ENCODE measurements at regions of chr3 and their contacts with region 1.

Region 1: GRCh38 chr3:36729204-36730056 is 34.9 kb downstream of the DCLK3 start:
- DNase-seq: peak; percentile 69
- H3K4me3 ChIP-seq: no peak overlapping the region
- H3K27ac ChIP-seq: no peak overlapping the region
- H3K4me1 ChIP-seq: no peaks in the 10 kb centered on the region
- H3K27me3 ChIP-seq: no peaks in the 10 kb centered on the region
- CTCF ChIP-seq: peak; percentile 84

Region 2: DNA sequence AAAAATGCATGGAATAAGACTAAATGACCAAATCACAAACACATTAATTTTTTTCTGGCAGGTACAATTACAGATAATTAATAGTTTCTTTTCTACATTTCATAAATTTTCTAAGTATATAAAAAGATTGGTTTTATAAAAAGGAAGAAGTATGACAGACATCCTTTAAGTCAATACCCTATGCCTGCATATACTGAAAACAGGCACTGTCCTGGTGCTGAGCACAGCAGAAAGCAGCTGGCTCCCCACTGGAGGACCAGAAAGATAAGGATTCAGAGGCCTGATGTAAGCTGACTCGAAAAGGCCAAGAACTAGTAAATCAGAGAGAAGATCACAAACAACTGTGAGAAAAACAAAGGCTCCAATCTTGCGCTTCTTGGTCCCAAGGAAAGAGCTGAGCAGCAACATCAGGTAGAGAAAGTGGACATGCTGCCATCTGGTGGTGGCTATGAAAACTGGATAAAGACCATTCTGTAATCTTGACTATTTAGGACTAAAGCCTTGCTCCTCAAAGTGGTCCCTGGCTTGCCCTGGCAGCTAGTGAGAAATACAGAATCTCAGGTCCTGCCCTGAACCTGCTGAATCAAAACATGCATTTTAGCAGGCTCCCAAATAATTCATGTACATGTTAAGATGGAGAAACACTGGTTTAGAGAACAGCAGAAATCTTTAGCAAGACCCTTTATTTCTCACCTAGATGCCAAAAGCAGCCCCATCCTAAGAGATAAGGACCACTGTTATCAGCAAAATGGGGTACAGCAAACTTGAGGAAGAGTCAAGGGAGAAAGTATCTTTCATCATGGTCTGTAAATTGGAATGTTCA is 139.4 kb after region 1 on chr3:
- CTCF ChIA-PET with region 1: no interaction called
- POLR2A ChIA-PET with region 1: no interaction called
- intact Hi-C with region 1: loop called (anchors 2 kb)
- DNase-seq: peak; percentile 78
- H3K4me3 ChIP-seq: no peak overlapping the region
- H3K27ac ChIP-seq: no peak overlapping the region
- H3K4me1 ChIP-seq: no peaks in the 10 kb centered on the region
- H3K27me3 ChIP-seq: no peaks in the 10 kb centered on the region
- CTCF ChIP-seq: peak; percentile 84

Region 3: DNA sequence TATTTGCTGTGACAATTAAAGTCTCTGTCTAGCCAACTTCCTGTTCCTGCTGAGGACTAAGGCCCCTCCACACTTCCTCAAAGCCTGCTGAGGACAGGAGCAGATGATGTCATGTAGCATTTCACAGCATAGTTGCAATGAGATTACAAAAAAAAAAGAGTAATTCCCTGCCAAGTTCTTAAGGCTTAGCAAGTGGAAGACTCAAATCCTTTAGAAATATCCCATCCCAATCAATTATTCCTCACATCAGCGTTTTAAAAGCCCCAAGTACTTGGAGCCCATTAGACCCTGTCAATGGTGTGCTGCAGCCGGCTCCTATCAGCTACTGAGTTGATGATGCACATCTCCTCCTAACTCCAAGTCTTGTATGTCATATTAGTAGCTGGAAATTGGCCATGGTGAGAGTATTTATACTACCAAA is 163.7 kb after region 1 on chr3:
- CTCF ChIA-PET with region 1: no interaction called
- POLR2A ChIA-PET with region 1: interaction called, 10 read pairs
- intact Hi-C with region 1: no loop called
- DNase-seq: peak; percentile 99
- H3K4me3 ChIP-seq: no peak overlapping the region
- H3K27ac ChIP-seq: no peak overlapping the region
- H3K4me1 ChIP-seq: peaks cover 54% of the 10 kb centered on the region
- H3K27me3 ChIP-seq: peaks cover 4% of the 10 kb centered on the region
- CTCF ChIP-seq: no peak

Region 4: DNA sequence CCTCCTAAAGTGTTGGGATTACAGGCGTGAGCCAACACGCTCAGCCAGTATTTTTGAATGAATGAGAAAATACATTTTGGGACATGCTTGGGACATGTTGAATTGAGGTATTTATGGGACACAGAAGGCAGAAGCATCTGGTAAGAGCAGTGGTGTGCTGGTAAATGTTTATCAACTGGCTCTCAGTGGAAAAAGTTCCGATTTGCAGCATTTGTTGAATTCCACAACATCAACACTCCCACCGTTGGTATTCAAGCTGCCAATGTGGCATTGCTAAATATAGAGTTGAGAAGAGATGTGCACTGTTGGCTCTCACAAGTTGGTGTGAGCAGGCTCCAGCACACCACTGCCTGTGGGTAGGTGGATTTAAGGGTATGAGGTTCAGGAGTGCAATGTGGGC is 480.8 kb after region 1 on chr3:
- CTCF ChIA-PET with region 1: no interaction called
- POLR2A ChIA-PET with region 1: no interaction called
- intact Hi-C with region 1: loop called (anchors 5 kb)
- DNase-seq: no peak
- H3K4me3 ChIP-seq: no peak overlapping the region
- H3K27ac ChIP-seq: no peak overlapping the region
- H3K4me1 ChIP-seq: no peaks in the 10 kb centered on the region
- H3K27me3 ChIP-seq: no peaks in the 10 kb centered on the region
- CTCF ChIP-seq: no peak

Region 5: DNA sequence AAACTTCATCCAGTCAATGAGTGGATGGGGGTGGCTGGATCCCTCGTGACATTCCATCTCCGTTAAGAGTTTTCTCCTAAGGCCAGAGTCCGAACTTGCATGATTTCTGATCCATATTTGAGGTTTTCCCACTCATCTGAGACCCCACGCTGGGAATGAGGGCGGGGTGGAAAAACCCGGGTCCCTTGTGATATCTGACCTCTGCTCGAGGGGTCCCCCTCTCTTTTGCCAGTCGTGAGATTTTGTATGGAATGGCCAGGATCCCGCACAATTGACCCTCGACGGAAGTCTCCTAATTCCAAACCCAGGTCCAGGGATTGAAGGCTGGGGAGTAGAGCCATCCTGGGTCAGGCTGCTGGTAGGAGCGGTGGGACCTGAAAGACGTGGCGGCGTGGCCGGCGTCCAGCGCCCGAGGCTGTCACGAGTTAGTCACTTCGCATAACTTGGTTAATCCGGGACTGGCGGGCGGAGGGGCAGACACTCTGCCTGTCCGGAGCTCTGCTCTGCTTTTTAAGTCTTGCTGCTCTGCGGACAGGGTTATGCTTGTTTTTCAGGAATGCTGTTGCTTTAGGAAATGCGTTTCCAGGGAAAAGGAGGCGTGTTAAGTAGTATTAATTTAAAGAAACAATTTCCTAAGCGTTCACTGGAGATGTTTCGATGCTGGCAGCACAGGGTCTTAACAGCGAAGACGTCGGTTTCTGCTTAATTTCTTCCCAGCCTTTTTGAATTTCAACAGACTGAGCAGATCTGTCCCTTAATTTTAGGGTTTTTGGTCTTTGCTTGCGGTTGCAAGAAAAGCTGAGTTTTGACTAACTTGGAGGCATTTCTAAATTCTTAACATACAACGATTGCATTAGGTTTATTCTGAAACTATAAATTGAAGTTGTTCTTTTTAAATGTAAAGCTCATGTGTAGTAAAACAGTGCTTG is 514.7 kb after region 1 on chr3:
- CTCF ChIA-PET with region 1: no interaction called
- POLR2A ChIA-PET with region 1: no interaction called
- intact Hi-C with region 1: no loop called
- DNase-seq: peak; percentile 47
- H3K4me3 ChIP-seq: peak overlapping the region; percentile 83
- H3K27ac ChIP-seq: peak overlapping the region; percentile 87
- H3K4me1 ChIP-seq: peaks cover 15% of the 10 kb centered on the region
- H3K27me3 ChIP-seq: no peaks in the 10 kb centered on the region
- CTCF ChIP-seq: no peak